ENCODE measurements at regions of chr5 and their contacts with region 1.

Region 1: DNA sequence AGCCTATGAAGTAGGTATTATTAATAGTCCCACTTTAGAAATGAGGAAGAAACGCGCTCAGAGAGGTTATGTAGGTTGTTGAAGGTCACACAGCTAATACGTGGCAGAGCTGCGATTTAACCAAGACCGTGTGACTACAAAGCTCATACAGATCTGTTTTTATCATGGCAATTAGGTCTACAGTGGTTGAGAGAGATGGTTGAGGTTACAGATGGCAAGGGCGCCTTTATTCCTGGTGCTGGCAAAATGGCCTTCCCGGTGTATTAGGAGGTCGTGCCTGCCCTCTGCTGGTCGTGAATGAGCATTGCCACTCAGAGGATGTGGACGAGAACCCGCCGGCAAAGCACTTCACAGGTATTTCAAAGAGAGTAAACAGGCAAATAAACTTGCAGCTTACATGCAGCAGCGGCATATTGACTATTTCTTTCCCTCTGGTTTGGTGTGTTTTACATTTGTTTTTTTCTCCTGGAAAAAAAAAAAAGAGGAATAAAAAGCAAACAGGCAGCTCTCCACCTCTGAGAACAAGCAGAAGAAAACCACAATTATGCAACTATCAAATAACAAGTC is 65.3 kb upstream of the EGFLAM start:
- DNase-seq: peak; percentile 67 to 84 (median 80)
- H3K4me3 ChIP-seq: no peak overlapping the region
- H3K27ac ChIP-seq: no peak overlapping the region
- H3K4me1 ChIP-seq: peaks cover 0 to 3% (median 0%) of the 10 kb centered on the region in 4 experiments
- H3K27me3 ChIP-seq: peaks cover 7 to 29% (median 17%) of the 10 kb centered on the region in 5 experiments

Region 2: GRCh38 chr5:37412515-37413277 is 780.4 kb before region 1 on chr5:
- CTCF ChIA-PET with region 1: interaction called, 57 read pairs
- POLR2A ChIA-PET with region 1: no interaction called
- DNase-seq: peak; percentile 79 to 85 (median 80)
- H3K4me3 ChIP-seq: no peak overlapping the region
- H3K27ac ChIP-seq: no peak overlapping the region
- H3K4me1 ChIP-seq: no peaks in the 10 kb centered on the region
- H3K27me3 ChIP-seq: no peaks in the 10 kb centered on the region

Region 3: GRCh38 chr5:37495210-37495609 is 697.9 kb before region 1 on chr5:
- CTCF ChIA-PET with region 1: interaction called, 11 read pairs
- POLR2A ChIA-PET with region 1: no interaction called
- DNase-seq: peak; percentile 54 to 83 (median 72)
- H3K4me3 ChIP-seq: no peak overlapping the region
- H3K27ac ChIP-seq: no peak overlapping the region
- H3K4me1 ChIP-seq: no peaks in the 10 kb centered on the region
- H3K27me3 ChIP-seq: no peaks in the 10 kb centered on the region

Region 4: GRCh38 chr5:37837414-37838032 is 355.6 kb before region 1 on chr5:
- CTCF ChIA-PET with region 1: interaction called, 22 read pairs
- POLR2A ChIA-PET with region 1: no interaction called
- DNase-seq: peak; percentile 62 to 78 (median 69)
- H3K4me3 ChIP-seq: peak overlapping the region in 4 of 7 experiments; percentile 50 to 58 (median 54)
- H3K27ac ChIP-seq: no peak overlapping the region
- H3K4me1 ChIP-seq: peaks cover 0 to 67% (median 50%) of the 10 kb centered on the region in 4 experiments
- H3K27me3 ChIP-seq: peaks cover 10 to 100% (median 76%) of the 10 kb centered on the region in 5 experiments

Region 5: DNA sequence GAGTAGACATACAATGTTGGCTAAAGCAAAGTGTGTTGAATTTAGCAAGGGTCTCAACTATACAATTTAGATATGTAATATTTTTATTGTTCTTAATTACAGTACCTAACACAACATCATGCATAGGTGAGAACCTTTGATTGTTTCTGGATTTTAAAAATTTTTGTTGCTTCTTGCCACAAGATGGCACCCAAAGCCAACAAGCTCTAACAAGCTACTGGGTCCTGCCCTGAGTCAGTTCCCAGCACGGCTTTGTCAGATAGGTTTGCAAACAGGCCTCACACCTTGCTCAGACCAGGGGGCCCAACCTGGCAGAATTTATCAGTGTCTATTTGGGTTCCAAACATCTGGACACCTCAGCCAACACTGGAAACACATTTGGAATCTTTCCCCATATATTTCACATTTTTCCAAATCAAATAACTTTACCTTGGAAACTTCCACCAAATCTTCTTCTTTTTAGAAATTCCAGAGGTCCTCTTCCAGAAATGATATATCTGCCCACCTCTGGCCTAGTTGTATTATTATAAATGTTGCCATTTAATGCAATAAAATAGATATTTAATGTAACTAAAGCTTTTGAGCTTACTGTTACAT is 15.8 kb after region 1 on chr5:
- CTCF ChIA-PET with region 1: interaction called, 11 read pairs
- POLR2A ChIA-PET with region 1: no interaction called
- DNase-seq: peak; percentile 27 to 55 (median 51)
- H3K4me3 ChIP-seq: no peak overlapping the region
- H3K27ac ChIP-seq: no peak overlapping the region
- H3K4me1 ChIP-seq: no peaks in the 10 kb centered on the region
- H3K27me3 ChIP-seq: peaks cover 0 to 32% (median 9%) of the 10 kb centered on the region in 5 experiments

Region 6: DNA sequence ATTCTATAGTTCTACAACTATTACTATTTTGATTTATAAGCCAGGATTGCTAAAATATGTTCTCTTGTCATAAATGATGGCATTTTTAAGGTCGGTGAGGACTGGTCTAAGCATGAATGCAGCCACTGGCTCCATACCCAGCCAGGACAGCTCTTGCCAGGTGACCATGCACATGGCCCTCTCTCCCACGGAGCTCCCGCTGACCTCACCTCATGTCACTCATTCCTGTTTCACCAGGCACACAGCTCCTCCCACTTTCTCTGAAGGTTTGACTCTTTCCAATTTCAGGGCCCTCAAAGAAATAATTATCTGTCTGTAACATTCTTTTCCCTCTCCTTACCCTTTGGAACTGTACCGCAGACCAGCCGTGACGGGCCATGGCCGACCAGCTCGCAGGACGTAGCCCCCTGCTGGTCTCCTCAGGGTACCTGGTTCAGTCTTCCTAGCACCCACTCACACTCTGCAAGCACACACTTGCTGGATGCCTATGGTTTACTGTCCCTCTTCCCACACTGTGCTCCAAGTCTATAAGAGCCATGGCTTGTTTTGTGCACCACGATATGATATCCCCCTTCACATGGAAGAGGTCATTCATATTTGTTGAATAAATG is 290.8 kb after region 1 on chr5:
- CTCF ChIA-PET with region 1: no interaction called
- POLR2A ChIA-PET with region 1: no interaction called
- DNase-seq: peak in 1 of 3 donors; percentile 6
- H3K4me3 ChIP-seq: no peak overlapping the region
- H3K27ac ChIP-seq: no peak overlapping the region
- H3K4me1 ChIP-seq: no peaks in the 10 kb centered on the region
- H3K27me3 ChIP-seq: peaks cover 12 to 84% (median 49%) of the 10 kb centered on the region in 5 experiments

Measured in common myeloid progenitor, CD34-positive (primary cell).